ENCODE measurements at regions of chr20 and their contacts with region 1.

Region 1: GRCh38 chr20:4726710-4727397 is 5.1 kb downstream of the PRND start:
- DNase-seq: peak; percentile 76
- H3K4me3 Mint-ChIP-seq: peak overlapping the region; percentile 36
- H3K27ac Mint-ChIP-seq: peak overlapping the region; percentile 1
- H3K4me1 Mint-ChIP-seq: peaks cover 10% of the 10 kb centered on the region
- H3K27me3 Mint-ChIP-seq: peaks cover 2% of the 10 kb centered on the region

Region 2: DNA sequence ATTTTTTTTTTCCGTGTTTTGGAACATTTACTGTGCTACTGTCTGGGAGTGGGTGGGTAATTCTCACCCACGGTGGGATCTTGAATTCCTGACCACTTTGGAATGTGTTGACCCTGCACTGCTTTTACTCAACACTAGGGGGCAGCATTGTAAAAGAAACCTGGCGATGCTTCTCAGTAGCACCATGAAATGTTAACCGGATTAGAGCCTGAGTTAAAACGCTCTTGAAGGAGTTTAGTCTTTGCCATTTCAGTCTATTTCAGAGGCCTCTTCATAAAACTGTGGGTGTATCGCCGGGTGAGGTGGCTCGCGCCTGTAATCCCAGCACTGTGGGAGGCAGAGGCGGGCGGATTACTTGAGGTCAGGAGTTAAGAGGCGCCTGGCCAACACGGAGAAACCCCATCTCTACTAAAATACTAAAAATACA is 119.6 kb before region 1 on chr20:
- CTCF ChIA-PET with region 1: interaction called, 194 read pairs
- POLR2A ChIA-PET with region 1: interaction called, 3 read pairs
- intact Hi-C with region 1: no loop called
- DNase-seq: peak; percentile 62
- H3K4me3 Mint-ChIP-seq: no peak overlapping the region
- H3K27ac Mint-ChIP-seq: no peak overlapping the region
- H3K4me1 Mint-ChIP-seq: no peaks in the 10 kb centered on the region
- H3K27me3 Mint-ChIP-seq: peaks cover 7% of the 10 kb centered on the region

Region 3: DNA sequence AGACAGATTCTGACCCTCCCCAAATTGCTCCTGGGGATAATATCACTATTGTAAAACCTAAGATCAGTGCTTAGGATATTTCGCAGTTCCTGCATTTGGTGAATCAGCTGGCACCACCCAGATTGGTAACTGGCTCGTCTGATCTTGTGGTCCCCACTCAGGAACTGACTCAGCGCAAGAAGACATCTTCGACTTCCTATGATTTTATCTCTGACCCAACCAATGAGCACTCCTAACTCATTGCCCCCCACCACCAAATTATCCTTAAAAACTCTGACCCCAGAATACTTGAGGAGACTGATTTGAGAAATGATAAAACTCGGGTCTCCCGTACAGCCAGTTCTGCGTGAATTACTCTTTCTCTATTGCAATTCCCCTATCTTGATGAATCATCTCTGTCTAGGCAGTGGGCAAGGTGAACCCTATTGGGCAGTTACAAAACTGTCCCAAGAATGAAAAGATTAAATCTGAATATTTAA is 60.8 kb before region 1 on chr20:
- CTCF ChIA-PET with region 1: no interaction called
- POLR2A ChIA-PET with region 1: no interaction called
- intact Hi-C with region 1: loop called (anchors 5 kb)
- DNase-seq: peak; percentile 78
- H3K4me3 Mint-ChIP-seq: peak overlapping the region; percentile 64
- H3K27ac Mint-ChIP-seq: peak overlapping the region; percentile 88
- H3K4me1 Mint-ChIP-seq: peaks cover 36% of the 10 kb centered on the region
- H3K27me3 Mint-ChIP-seq: no peaks in the 10 kb centered on the region

Region 4: DNA sequence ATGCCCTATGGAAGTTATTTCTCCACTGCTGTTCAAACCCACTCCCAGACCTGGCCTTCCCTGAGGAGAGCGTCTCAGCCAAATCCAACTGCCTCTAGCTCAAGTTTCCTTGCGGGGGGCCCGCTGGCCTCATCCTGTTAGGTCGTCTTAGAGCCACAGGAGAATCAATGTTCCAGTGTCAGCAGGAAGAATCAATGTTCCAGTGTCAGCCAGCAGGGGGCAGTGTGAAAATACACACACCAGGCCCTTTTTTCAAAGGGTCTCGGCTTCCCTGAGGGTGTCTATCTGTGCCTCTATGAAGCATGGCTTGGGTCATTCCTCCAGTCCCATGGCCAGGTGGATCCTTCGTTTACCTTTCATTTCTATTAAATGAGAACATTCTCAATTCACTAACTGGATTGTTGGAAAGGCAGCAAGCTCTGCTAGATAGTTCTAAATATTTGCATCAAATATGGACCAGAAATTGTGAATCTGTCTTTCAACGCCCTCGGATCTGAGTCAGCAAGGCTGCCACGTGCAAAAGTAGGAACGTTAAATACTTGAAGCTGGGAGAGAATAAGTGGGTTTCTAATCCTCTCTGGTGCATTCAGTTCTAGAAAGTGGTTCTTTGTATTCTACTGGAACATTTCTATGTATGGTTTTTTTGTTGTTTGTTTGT is 14.0 kb after region 1 on chr20:
- CTCF ChIA-PET with region 1: interaction called, 33 read pairs
- POLR2A ChIA-PET with region 1: no interaction called
- intact Hi-C with region 1: no loop called
- DNase-seq: peak; percentile 77
- H3K4me3 Mint-ChIP-seq: no peak overlapping the region
- H3K27ac Mint-ChIP-seq: no peak overlapping the region
- H3K4me1 Mint-ChIP-seq: no peaks in the 10 kb centered on the region
- H3K27me3 Mint-ChIP-seq: peaks cover 7% of the 10 kb centered on the region

Measured in activated CD4-positive, alpha-beta memory T cell treated with anti-CD3 and anti-CD28 coated beads for 36 hours (primary cell).